CD4-positive, alpha-beta memory T cell (primary cell): ENCODE measurements at regions of chr19 and their contacts with region 1.

Region 1: DNA sequence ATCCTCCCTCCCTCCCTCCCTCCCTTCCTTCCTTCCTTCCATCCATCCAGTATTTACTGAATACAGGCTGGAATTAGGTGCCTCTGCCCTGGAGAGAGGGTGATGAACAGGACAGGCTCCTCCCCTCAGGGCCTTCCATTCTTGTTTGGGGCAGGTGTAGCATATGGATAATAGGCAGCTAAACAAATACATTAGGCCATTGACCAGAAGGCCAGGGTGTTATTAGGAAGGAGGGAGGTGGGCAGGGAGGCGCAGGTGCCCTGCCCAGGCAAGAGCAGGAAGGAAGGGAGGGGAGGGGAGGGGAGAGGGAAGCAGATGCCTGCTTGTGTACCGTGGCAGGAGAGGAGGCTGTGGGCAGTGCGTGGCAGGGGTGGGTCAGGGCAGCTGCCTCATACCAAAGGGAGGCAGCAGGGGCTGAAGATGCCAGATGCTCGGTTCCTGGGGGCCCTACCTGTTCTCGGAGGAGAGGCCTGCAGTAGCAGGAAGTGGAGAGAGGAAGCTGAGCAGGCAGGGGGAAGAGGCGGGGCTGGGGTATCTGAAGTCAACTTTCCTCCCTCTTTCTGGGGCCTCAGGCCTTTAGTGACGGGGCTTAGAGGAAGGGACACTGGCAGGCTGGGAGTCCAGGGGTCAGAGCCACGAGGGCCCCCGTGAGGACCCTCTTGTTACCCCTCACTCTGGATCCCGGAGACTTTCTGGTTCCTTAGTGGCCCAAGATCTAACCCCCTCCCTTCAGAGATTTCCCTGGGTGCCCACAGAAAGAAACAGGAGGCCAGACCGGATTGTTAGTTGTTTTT is at the start of gene RINL:
- DNase-seq: peak; percentile 68 to 82 (median 72)
- H3K4me3 ChIP-seq: peak within 1 kb of the TSS; percentile 41 to 73
- H3K4me3 Mint-ChIP-seq: peak within 1 kb of the TSS; percentile 79 to 94 (median 88)
- H3K27ac ChIP-seq: peak within 1 kb of the TSS; percentile 89
- H3K27ac Mint-ChIP-seq: peak within 1 kb of the TSS; percentile 96 to 99 (median 97)
- H3K4me1 ChIP-seq: peaks cover 49% of the 10 kb centered on the region
- H3K4me1 Mint-ChIP-seq: peaks cover 21 to 40% (median 30%) of the 10 kb centered on the region in 4 donors
- H3K27me3 ChIP-seq: no peaks in the 10 kb centered on the region
- H3K27me3 Mint-ChIP-seq: no peaks in the 10 kb centered on the region
- total RNA-seq, gene RINL: 64.4 to 65.9 TPM

Region 2: GRCh38 chr19:38736036-38736412 is 142.0 kb before region 1 on chr19:
- CTCF ChIA-PET with region 1: interaction called, 3 read pairs
- POLR2A ChIA-PET with region 1: interaction called, 14 read pairs
- intact Hi-C with region 1: no loop called
- DNase-seq: peak; percentile 57 to 80 (median 59)
- H3K4me3 ChIP-seq: peak overlapping the region in 1 of 2 donors; percentile 14
- H3K4me3 Mint-ChIP-seq: peak overlapping the region; percentile 27 to 77 (median 60)
- H3K27ac ChIP-seq: peak overlapping the region; percentile 30
- H3K27ac Mint-ChIP-seq: peak overlapping the region in 4 of 7 donors; percentile 30 to 88 (median 74)
- H3K4me1 ChIP-seq: peaks cover 57% of the 10 kb centered on the region
- H3K4me1 Mint-ChIP-seq: peaks cover 24 to 69% (median 42%) of the 10 kb centered on the region in 4 donors
- H3K27me3 ChIP-seq: no peaks in the 10 kb centered on the region
- H3K27me3 Mint-ChIP-seq: peaks cover 0 to 2% of the 10 kb centered on the region in 2 donors

Region 3: GRCh38 chr19:38856813-38857212 is 21.2 kb before region 1 on chr19:
- CTCF ChIA-PET with region 1: interaction called, 5 read pairs
- POLR2A ChIA-PET with region 1: interaction called, 297 read pairs
- intact Hi-C with region 1: no loop called
- DNase-seq: no peak
- H3K4me3 ChIP-seq: no peak overlapping the region
- H3K4me3 Mint-ChIP-seq: peak overlapping the region in 7 of 8 donors; percentile 54 to 92 (median 67)
- H3K27ac ChIP-seq: peak overlapping the region; percentile 35
- H3K27ac Mint-ChIP-seq: peak overlapping the region in 5 of 7 donors; percentile 78 to 99 (median 92)
- H3K4me1 ChIP-seq: peaks cover 30% of the 10 kb centered on the region
- H3K4me1 Mint-ChIP-seq: peaks cover 20 to 38% (median 30%) of the 10 kb centered on the region in 4 donors
- H3K27me3 ChIP-seq: no peaks in the 10 kb centered on the region
- H3K27me3 Mint-ChIP-seq: peaks cover 0 to 1% of the 10 kb centered on the region in 2 donors

Region 4: DNA sequence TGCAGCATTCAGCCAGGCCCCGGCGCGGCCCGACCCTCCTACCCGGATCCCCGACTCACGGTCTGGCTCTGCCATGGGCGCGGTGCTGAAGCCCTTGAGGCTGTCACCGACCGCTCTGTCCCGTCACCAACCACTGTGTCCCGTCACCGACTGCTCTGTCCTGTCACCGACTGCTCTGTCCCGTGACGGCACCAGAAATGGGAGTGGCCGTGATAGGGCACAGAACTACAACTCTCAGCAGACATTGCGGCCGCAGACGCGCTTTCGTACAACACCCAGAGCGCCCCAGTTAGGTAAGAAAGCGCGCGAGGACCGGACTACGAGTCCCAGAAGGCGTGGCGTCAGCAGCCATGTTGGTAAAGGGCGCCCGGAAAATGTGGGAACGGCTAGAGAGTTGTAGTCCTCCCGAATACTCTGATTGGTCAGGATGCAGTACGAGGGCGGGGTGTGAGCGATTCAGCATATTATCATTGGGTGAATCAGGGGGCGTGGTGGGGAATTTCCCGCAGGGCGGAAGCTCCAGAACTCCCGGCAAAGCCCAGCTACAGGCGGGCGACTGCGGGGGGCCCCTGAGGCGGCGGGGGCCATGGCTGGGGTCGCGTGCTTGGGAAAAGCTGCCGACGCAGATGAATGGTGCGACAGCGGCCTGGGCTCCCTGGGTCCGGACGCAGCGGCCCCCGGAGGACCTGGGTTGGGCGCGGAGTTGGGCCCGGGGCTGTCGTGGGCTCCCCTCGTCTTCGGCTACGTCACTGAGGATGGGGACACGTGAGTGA is 21.7 kb after region 1 on chr19 and contains the starts of genes NFKBIB and SIRT2:
- CTCF ChIA-PET with region 1: no interaction called
- POLR2A ChIA-PET with region 1: interaction called, 15 read pairs
- intact Hi-C with region 1: loop called (anchors 1 kb)
- DNase-seq: peak; percentile 98 to 100 (median 100)
- H3K4me3 ChIP-seq: peak within 1 kb of the TSS; percentile 71 to 87
- H3K4me3 Mint-ChIP-seq: peak within 1 kb of the TSS; percentile 92 to 98 (median 96)
- H3K27ac ChIP-seq: peak within 1 kb of the TSS; percentile 99
- H3K27ac Mint-ChIP-seq: peak within 1 kb of the TSS; percentile 90 to 100 (median 99)
- H3K4me1 ChIP-seq: peaks cover 34% of the 10 kb centered on the region
- H3K4me1 Mint-ChIP-seq: peaks cover 17 to 59% (median 39%) of the 10 kb centered on the region in 4 donors
- H3K27me3 ChIP-seq: no peaks in the 10 kb centered on the region
- H3K27me3 Mint-ChIP-seq: no peaks in the 10 kb centered on the region
- total RNA-seq, gene NFKBIB: 23.9 to 26.0 TPM
- total RNA-seq, gene SIRT2: 47.0 to 50.0 TPM

Region 5: DNA sequence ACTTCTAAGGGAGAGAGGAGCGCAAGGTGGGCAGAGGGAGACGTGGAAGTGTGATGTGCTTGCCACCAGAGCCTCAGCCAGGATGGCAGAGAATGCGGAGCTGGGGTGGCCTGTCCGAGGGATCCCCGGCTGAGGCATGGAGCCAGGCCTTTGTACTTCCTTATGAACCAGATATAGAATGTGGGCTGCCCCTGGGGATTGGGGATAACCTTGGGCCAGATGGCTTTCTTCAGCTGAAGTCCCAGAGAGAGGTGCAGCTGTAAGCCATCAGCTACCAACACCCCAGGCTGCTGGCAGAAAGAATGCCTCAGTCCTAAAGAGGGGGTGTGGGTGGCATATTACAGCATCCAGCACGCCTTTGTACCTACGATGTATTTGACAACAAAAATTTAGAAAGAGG is 123.1 kb after region 1 on chr19:
- CTCF ChIA-PET with region 1: no interaction called
- POLR2A ChIA-PET with region 1: no interaction called
- intact Hi-C with region 1: no loop called
- DNase-seq: no peak
- H3K4me3 ChIP-seq: no peak overlapping the region
- H3K4me3 Mint-ChIP-seq: no peak overlapping the region
- H3K27ac ChIP-seq: no peak overlapping the region
- H3K27ac Mint-ChIP-seq: no peak overlapping the region
- H3K4me1 ChIP-seq: no peaks in the 10 kb centered on the region
- H3K4me1 Mint-ChIP-seq: no peaks in the 10 kb centered on the region
- H3K27me3 ChIP-seq: no peaks in the 10 kb centered on the region
- H3K27me3 Mint-ChIP-seq: peaks cover 12 to 20% of the 10 kb centered on the region in 2 donors